ENCODE measurements at regions of chr9 and their contacts with region 1.

Region 1: DNA sequence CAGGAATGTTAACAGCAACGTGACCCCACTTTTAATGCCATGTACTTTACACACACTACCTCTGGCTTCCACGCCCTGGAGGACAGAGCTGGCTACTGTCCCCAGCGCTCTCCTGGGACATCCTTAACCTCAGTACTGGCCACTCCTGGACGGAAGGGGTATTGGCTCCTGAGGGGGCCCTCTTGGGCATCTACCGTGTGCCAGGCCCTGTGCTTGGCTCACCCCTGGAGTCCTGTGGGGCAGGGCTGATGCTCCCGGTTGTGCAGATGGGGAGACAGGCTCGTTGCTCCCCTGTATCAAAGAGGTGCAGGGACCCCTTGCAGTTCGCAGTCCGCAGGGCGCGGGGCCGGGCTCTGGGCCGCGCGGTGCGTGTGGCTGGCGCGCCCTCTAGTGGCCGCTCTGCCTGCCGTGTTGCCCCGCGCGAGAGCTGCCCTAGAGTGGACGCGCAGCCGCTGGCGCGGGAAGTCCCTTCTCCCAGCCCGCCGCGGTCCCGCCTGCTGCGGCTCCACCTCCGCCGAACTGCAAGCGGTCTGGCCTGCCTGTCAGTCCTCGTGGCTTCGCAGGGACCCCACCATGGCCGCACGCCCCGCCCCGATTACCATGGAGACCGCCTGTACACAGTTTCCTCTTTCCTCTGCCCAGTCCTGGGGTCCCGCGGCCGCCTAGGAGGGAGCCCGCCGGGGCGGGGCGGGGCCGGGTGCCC is at the start of gene WDR38:
- DNase-seq: peak; percentile 60 to 94 (median 76)
- ATAC-seq: peak; percentile 89 to 92 (median 91)
- H3K4me3 ChIP-seq: peak within 1 kb of the TSS in 3 of 4 donors; percentile 19 to 47 (median 34)
- H3K27ac ChIP-seq: no peak within 1 kb of the TSS
- H3K4me1 ChIP-seq: peaks cover 0 to 6% (median 0%) of the 10 kb centered on the region in 3 donors
- H3K27me3 ChIP-seq: no peaks in the 10 kb centered on the region
- CTCF ChIP-seq: peak; percentile 94 to 99 (median 98)
- total RNA-seq, gene WDR38: 0.13 TPM in 1 of 6 donors, not detected in the others

Region 2: DNA sequence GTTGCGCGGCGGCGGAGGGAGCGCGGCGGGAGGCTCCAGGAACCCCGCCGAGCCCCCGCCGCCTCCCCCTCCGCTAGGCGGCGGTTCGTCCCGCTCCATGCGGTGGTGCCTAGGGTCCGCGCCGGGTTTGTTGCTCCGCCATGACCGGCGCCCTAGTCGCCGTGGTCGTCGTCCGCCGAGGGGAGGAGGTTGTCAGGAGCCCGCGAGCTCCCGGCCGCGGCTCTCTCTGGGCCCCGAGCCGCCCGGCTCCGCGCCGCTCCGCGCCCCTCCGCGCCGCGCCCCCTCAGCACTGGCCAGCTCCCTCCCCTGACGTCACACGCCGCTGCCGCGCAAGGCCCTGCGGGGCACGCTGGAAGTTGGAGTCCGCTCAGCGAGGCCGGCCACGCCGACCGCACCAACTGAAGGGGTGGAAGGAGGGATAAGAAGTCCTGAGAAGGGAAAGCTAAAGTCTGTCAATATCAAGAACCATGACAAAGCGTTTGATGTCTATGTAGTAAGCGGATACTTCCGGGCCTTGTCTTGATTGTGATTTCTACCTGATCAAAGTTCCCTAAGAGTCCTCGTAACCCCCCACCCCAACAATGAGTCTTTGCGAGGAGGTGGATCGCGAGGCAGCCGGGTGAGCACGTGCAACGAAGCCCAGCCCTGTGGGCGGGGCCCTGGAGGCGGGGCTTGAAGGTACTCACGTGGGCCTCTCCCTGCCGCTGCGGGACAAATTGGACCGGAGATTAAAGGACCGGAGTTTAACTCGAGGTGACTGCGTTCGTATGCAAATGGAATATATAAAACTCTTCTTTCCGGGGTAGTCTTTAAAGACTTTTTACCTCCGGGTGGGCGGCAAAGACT is 81.7 kb before region 1 on chr9 and contains the start of gene NR6A1:
- intact Hi-C with region 1: loop called in 2 of 3 experiments (anchors 2 kb)
- DNase-seq: peak; percentile 96 to 98 (median 98)
- ATAC-seq: peak; percentile 88 to 95 (median 90)
- H3K4me3 ChIP-seq: peak within 1 kb of the TSS; percentile 93 to 99 (median 96)
- H3K27ac ChIP-seq: peak within 1 kb of the TSS; percentile 74 to 84 (median 80)
- H3K4me1 ChIP-seq: peaks cover 0 to 13% (median 5%) of the 10 kb centered on the region in 3 donors
- H3K27me3 ChIP-seq: no peaks in the 10 kb centered on the region
- CTCF ChIP-seq: no peak
- total RNA-seq, gene NR6A1: 2.1 to 3.9 (median 2.5) TPM

Region 3: GRCh38 chr9:124779362-124780059 is 73.5 kb before region 1 on chr9:
- intact Hi-C with region 1: loop called in 2 of 3 experiments (anchors 2 to 10 kb)
- DNase-seq: peak in 2 of 6 donors; percentile 12 to 34
- ATAC-seq: no peak
- H3K4me3 ChIP-seq: no peak overlapping the region
- H3K27ac ChIP-seq: no peak overlapping the region
- H3K4me1 ChIP-seq: peaks cover 0 to 7% (median 5%) of the 10 kb centered on the region in 3 donors
- H3K27me3 ChIP-seq: no peaks in the 10 kb centered on the region
- CTCF ChIP-seq: no peak

Region 4: GRCh38 chr9:124794902-124795491 is 58.0 kb before region 1 on chr9:
- intact Hi-C with region 1: loop called in 1 of 3 experiments (anchors 5 kb)
- DNase-seq: peak in 3 of 6 donors; percentile 25 to 63 (median 46)
- ATAC-seq: peak in 2 of 4 donors; percentile 28 to 34
- H3K4me3 ChIP-seq: no peak overlapping the region
- H3K27ac ChIP-seq: no peak overlapping the region
- H3K4me1 ChIP-seq: peaks cover 19 to 20% (median 19%) of the 10 kb centered on the region in 3 donors
- H3K27me3 ChIP-seq: no peaks in the 10 kb centered on the region
- CTCF ChIP-seq: peak in 1 of 4 donors; percentile 11

Region 5: GRCh38 chr9:125126019-125126746 is 273.2 kb after region 1 on chr9:
- intact Hi-C with region 1: no loop called
- DNase-seq: peak in 4 of 6 donors; percentile 14 to 61 (median 32)
- ATAC-seq: peak; percentile 17 to 92 (median 82)
- H3K4me3 ChIP-seq: no peak overlapping the region
- H3K27ac ChIP-seq: no peak overlapping the region
- H3K4me1 ChIP-seq: peaks cover 0 to under 1% (median 0%) of the 10 kb centered on the region in 3 donors
- H3K27me3 ChIP-seq: no peaks in the 10 kb centered on the region
- CTCF ChIP-seq: no peak